Pancreas (tissue), 10 donors: ENCODE measurements at regions of chr12 and their contacts with region 1.

Region 1: DNA sequence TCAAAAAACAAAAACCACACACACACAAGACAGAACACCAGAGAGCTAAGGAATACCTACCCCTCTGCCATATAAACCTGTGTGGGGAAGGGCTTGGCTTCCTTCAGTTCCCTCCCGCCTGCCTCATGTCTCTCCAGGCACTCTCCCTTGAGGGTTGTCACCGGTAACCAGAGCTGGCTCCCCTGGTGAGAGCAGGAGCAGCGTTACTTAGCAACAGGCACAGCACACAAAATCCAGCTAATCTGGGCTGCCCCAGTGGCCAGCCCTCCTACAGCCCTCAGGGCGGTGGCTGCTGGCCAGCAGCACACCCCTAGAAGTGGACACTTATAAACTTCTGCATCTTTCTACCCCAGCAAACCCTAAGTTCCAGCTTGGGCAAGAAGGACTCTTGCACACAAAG is 21.6 kb upstream of the NR4A1 start:
- DNase-seq: no peak
- ATAC-seq: peak in 2 of 4 donors; percentile 2 to 5
- H3K4me3 ChIP-seq: no peak overlapping the region
- H3K27ac ChIP-seq: no peak overlapping the region
- H3K4me1 ChIP-seq: peaks cover 0 to 18% (median 5%) of the 10 kb centered on the region in 3 donors
- H3K27me3 ChIP-seq: no peaks in the 10 kb centered on the region
- CTCF ChIP-seq: no peak

Region 2: DNA sequence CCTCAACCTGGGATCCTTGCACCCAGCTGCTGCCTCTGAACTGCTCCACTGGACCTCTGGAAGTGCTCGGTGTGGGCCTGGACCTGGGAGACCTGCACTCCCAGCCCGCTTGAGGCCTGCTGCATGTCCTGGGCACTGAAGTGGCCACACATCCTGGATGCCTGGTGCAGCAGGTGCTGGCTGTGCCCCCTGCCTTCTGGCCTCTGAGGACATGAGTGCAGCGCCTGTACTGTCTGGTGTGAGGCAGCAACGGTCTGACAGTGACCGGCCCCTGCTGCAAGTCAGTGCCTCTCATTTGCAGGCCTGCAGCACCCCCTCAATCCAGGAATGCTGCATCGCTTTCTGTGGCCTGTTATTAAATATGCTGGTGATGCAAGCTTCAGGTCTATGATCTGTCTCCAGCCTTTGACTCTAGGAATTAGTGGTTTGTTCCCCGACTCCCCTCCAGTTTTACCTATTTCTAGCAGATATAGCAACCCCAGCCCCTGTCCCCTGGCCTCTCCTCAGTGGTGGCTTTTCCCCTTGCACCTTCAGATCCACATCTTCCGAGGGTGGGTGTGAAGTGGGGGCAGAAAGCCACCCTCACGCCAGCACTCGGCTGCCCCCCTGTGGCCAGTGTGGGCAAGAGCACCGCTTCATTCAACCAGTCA is 53.4 kb after region 1 on chr12:
- intact Hi-C with region 1: loop called in 2 of 3 experiments (anchors 5 kb)
- DNase-seq: peak in 2 of 6 donors; percentile 61 to 83
- ATAC-seq: peak; percentile 64 to 84 (median 80)
- H3K4me3 ChIP-seq: no peak overlapping the region
- H3K27ac ChIP-seq: no peak overlapping the region
- H3K4me1 ChIP-seq: no peaks in the 10 kb centered on the region
- H3K27me3 ChIP-seq: no peaks in the 10 kb centered on the region
- CTCF ChIP-seq: peak; percentile 90 to 97 (median 94)

Region 3: GRCh38 chr12:52087961-52088820 is 58.5 kb after region 1 on chr12:
- intact Hi-C with region 1: loop called in 2 of 3 experiments (anchors 5 kb)
- DNase-seq: peak in 1 of 6 donors; percentile 29
- ATAC-seq: no peak
- H3K4me3 ChIP-seq: no peak overlapping the region
- H3K27ac ChIP-seq: no peak overlapping the region
- H3K4me1 ChIP-seq: peaks cover 0 to 8% (median 4%) of the 10 kb centered on the region in 3 donors
- H3K27me3 ChIP-seq: no peaks in the 10 kb centered on the region
- CTCF ChIP-seq: no peak

Region 4: DNA sequence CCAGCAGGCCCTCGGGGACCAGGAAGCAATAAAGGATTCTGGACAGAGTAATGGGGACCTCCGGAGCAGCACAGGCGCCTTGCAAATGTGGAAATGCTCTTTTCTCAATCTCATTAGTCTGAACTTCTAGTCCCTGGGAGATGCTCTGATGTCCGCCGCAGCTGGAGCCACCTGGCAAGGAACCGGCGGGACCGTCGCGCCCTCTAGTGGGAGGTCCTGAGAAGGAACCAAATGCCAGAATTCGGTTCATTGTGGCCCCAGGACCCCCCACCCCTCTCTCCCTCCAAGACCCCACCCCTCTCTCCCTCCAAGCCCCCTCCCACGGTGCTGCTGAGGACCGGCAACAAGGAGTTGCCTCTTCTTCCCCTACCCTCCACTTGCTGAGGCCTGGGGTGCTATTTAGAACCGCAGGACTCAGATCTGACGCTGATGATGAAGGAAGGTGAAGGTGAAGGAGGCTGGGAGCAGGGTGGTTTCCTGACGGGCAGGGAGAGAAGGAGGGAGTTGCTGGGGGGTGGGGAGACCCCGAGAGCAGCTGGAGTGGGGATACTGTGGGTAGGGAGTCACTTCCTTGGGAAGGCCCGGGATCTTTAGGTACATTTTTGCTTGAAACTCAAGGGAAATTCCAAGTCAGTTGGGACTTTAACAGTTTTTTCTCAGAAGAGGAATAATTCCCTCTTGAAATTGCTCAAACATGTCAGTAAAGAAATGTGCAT is 92.3 kb after region 1 on chr12:
- intact Hi-C with region 1: loop called in 1 of 3 experiments (anchors 5 kb)
- DNase-seq: peak; percentile 43 to 89 (median 70)
- ATAC-seq: peak; percentile 29 to 67 (median 60)
- H3K4me3 ChIP-seq: no peak overlapping the region
- H3K27ac ChIP-seq: no peak overlapping the region
- H3K4me1 ChIP-seq: peaks cover under 1 to 8% (median 3%) of the 10 kb centered on the region in 3 donors
- H3K27me3 ChIP-seq: no peaks in the 10 kb centered on the region
- CTCF ChIP-seq: peak; percentile 54 to 74 (median 72)

Region 5: GRCh38 chr12:52139552-52140062 is 109.9 kb after region 1 on chr12:
- intact Hi-C with region 1: no loop called
- DNase-seq: peak in 3 of 6 donors; percentile 38 to 72 (median 71)
- ATAC-seq: peak; percentile 78 to 95 (median 87)
- H3K4me3 ChIP-seq: no peak overlapping the region
- H3K27ac ChIP-seq: no peak overlapping the region
- H3K4me1 ChIP-seq: no peaks in the 10 kb centered on the region
- H3K27me3 ChIP-seq: no peaks in the 10 kb centered on the region
- CTCF ChIP-seq: peak; percentile 47 to 77 (median 66)